ENCODE measurements at regions of chr17 and their contacts with region 1.

Region 1: DNA sequence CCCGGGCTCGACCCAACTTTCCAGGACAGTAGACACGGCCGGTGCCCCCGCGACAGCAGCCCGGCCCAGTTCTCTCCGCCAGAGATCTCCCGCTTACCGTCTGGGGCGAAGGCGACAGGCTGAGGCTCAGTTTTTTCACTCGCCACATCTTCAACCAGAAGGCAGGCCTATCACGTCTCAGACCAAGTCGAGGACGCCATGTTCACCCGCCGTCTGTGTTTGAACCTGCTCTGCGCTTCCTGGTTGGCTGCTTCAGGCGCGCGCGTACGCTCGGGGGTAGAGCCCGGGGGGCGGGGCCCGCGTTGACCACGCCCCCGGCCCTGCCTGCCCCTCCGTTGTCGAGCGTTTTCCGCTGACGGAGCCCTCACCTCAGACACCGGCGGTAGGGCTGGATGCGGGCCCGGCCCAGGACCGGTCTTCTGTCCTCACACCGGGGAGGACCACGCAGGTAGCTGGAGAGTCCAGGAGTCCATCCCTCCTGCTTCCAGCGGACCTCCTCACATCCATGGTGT is at the start of gene SPAG5:
- DNase-seq: peak; percentile 93
- ATAC-seq: peak; percentile 100
- total RNA-seq, gene SPAG5: 20.9 TPM

Region 2: GRCh38 chr17:28524476-28525368 is 74.1 kb before region 1 on chr17:
- intact Hi-C with region 1: no loop called
- DNase-seq: no peak
- ATAC-seq: no peak

Region 3: DNA sequence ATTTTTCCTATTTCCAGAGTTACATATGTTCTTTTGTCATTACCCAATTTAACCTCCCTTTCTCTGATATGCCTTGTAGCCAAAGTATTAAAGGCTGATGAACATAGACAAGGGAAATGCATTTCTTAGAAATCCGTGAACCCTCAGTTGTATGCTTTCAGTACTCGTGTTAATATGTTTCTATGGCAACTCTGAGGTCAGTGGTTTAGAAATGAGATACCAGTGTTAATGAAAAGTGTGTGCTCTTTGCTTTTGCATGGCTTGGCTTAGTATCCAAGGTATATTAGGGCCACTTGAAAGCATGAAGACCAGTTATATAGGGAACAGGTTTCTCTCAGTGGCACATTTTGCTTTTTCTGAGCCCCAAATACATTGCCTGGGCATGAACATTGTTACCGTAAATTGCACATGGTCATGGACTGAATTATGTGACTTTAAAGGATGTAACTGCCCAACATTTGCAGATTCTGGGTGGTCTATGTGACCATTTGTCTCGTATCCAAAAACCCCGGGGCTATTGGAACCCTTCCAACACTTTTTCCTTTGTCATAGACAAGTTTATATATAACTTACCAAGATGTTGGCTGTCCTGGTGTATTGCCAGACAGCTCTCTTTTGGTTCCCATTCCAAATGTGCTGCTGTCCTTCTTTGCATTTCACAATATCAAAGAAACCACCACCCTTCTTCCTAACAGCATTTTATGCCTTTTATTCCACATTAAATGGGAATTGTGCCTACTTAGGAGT is 950.5 kb after region 1 on chr17:
- intact Hi-C with region 1: loop called (anchors 5 kb)
- DNase-seq: no peak
- ATAC-seq: no peak